PC-3 (cell line): ENCODE measurements at regions of chr1 and their contacts with region 1.

Region 1: GRCh38 chr1:64268653-64269557 is 65.5 kb downstream of the UBE2U start:
- DNase-seq: peak; percentile 87
- ATAC-seq: peak; percentile 97
- H3K4me3 ChIP-seq: peak overlapping the region; percentile 66
- H3K27ac ChIP-seq: peak overlapping the region; percentile 3; the same call in 1 of the 2 replicates
- H3K4me1 ChIP-seq: peaks cover 7% of the 10 kb centered on the region; the same call in 1 of the 2 replicates
- H3K27me3 ChIP-seq: no peaks in the 10 kb centered on the region
- CTCF ChIP-seq: peak; percentile 70

Region 2: DNA sequence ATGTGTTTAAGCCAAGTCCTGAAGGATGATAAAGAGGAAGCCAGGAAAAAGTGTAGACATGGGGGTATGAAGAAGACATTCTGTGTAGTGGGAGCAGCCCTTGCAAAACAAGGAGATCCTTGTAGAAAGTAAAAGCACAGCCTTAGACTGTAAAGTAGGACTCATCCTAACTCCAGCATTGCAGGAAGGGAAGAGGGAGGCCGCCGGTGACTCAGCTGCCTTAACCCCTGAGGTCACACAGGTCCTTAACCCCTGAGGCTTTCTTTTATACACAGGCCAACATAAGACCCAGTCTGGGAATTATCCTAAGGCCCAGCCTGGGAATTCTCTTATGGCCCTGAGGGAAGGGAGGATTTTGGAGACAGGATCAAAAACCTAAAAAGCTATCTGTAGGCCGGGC is 657.7 kb before region 1 on chr1:
- CTCF ChIA-PET with region 1: no interaction called
- POLR2A ChIA-PET with region 1: no interaction called
- intact Hi-C with region 1: no loop called
- DNase-seq: no peak
- ATAC-seq: peak; percentile 12; the same call in 1 of the 2 replicates
- H3K4me3 ChIP-seq: no peak overlapping the region
- H3K27ac ChIP-seq: no peak overlapping the region
- H3K4me1 ChIP-seq: peaks cover 17% of the 10 kb centered on the region; the same call in 1 of the 2 replicates
- H3K27me3 ChIP-seq: no peaks in the 10 kb centered on the region
- CTCF ChIP-seq: no peak

Region 3: DNA sequence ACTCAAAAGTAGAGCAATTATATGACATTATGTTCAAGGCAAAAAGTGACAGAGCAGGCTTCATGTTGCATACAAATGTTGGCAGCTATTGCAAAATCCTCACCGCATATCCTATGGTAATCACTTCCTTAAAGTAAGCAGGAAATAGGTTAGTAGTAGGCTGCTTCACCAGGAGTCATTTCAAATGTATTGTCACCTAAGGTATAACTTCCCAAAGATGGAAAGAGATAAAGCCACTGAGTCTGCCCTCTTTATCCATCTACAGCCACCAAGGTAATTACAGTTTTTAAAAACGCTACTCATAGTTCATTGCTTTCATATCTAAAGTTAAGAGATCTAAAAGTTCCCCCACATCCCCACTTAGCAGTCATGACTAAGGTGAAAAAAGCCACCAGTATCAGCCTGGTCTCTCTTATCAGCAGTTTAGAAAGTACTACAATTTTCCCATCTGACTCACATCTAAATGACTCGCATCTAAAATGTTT is 97.1 kb before region 1 on chr1:
- CTCF ChIA-PET with region 1: no interaction called
- POLR2A ChIA-PET with region 1: no interaction called
- intact Hi-C with region 1: no loop called
- DNase-seq: peak; percentile 85
- ATAC-seq: peak; percentile 69
- H3K4me3 ChIP-seq: peak overlapping the region; percentile 34; the same call in 1 of the 2 replicates
- H3K27ac ChIP-seq: peak overlapping the region; percentile 92
- H3K4me1 ChIP-seq: peaks cover 31% of the 10 kb centered on the region
- H3K27me3 ChIP-seq: no peaks in the 10 kb centered on the region
- CTCF ChIP-seq: no peak

Region 4: DNA sequence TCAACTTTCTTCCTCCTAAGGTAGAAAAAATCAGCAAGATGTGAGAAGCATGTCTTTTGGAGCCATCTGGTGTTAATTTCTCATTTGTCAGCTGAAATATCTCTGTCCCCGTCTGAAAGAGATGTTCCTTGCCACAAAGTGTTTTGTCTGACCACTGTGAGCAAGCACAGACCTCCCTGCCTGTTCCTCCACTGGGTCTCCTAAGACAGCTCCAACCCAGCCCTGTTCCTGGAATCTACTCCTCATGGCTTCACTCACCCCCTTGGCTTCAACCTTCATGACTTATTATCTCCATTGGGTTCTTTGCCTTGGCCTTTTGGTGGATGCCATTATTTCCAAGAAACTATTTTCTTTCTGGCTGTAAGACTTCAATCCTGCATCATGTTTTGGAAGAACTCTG is 135.3 kb after region 1 on chr1:
- CTCF ChIA-PET with region 1: interaction called, 4 read pairs
- POLR2A ChIA-PET with region 1: no interaction called
- intact Hi-C with region 1: loop called (anchors 1 kb)
- DNase-seq: no peak
- ATAC-seq: no peak
- H3K4me3 ChIP-seq: no peak overlapping the region
- H3K27ac ChIP-seq: no peak overlapping the region
- H3K4me1 ChIP-seq: no peaks in the 10 kb centered on the region
- H3K27me3 ChIP-seq: no peaks in the 10 kb centered on the region
- CTCF ChIP-seq: no peak

Region 5: GRCh38 chr1:64484651-64485050 is 215.7 kb after region 1 on chr1:
- CTCF ChIA-PET with region 1: no interaction called
- POLR2A ChIA-PET with region 1: no interaction called
- intact Hi-C with region 1: loop called (anchors 5 kb)
- DNase-seq: peak; percentile 96
- ATAC-seq: peak; percentile 87
- H3K4me3 ChIP-seq: peak overlapping the region; percentile 29; the same call in 1 of the 2 replicates
- H3K27ac ChIP-seq: peak overlapping the region; percentile 43
- H3K4me1 ChIP-seq: peaks cover 15% of the 10 kb centered on the region
- H3K27me3 ChIP-seq: no peaks in the 10 kb centered on the region
- CTCF ChIP-seq: no peak

Region 6: DNA sequence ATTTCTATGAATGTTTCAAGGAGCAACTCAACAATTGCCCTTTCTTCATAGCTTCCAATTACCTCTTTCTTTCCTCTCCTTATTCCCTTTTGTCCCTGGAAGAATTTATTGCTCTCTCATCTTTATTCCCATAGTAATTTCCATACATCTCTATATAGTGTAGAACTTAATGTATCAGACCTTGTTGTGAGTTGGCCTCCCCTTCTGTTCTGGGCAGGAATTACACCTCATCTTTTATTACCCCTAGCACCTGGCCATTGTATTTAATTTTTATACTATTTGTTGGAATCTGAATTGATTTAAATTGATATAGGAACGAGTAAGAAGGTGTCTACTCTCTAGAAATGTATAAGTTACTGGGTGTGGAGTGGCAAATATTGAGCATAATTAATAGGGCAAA is 315.6 kb after region 1 on chr1:
- CTCF ChIA-PET with region 1: no interaction called
- POLR2A ChIA-PET with region 1: no interaction called
- intact Hi-C with region 1: loop called (anchors 5 kb)
- DNase-seq: peak; percentile 39
- ATAC-seq: no peak
- H3K4me3 ChIP-seq: no peak overlapping the region
- H3K27ac ChIP-seq: no peak overlapping the region
- H3K4me1 ChIP-seq: no peaks in the 10 kb centered on the region
- H3K27me3 ChIP-seq: no peaks in the 10 kb centered on the region
- CTCF ChIP-seq: peak; percentile 73

Region 7: DNA sequence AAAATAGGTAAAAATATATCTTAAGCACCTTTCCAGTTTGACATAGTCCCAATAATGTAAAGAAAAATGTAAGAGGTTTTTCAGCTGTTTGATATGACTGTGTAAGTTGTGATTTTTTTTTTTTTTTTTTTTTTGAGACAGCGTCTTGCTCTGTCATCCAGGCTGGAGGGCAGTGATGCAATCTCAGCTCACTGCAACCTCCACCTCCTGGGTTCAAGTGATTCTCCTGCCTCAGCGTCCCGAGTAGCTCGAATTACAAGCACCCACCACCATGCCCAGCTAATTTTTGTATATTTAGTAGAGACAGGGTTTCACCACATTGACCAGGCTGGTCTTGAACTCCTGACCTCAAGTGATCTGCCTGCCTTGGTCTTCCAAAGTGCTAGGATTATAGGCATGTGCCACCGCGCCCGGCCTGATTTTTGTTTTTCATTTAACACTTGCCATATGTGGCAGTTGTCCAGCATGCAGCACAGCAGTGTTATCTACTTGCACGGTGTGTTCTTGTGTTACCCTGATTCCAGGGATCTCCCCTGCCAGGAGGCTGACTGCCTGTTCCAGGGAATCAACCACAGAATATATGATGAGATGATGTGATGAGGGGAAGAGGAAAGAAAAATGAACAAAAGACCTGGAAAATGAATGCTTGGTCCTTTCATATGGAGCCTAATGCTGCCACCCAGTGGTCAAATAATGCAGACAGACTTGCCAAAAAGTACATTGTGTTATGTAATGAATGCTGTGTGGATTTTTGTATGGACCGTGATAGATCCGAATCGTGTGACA is 555.0 kb after region 1 on chr1:
- CTCF ChIA-PET with region 1: no interaction called
- POLR2A ChIA-PET with region 1: no interaction called
- intact Hi-C with region 1: loop called (anchors 1 kb)
- DNase-seq: peak; percentile 84
- ATAC-seq: peak; percentile 73
- H3K4me3 ChIP-seq: no peak overlapping the region
- H3K27ac ChIP-seq: no peak overlapping the region
- H3K4me1 ChIP-seq: no peaks in the 10 kb centered on the region
- H3K27me3 ChIP-seq: no peaks in the 10 kb centered on the region
- CTCF ChIP-seq: peak; percentile 93